ENCODE measurements at regions of chr7 and their contacts with region 1.

Region 1: GRCh38 chr7:101602484-101603241 is 26.4 kb downstream of the MYL10 start:
- DNase-seq: peak; percentile 85 to 90
- H3K4me3 ChIP-seq: no peak overlapping the region
- H3K4me3 Mint-ChIP-seq: no peak overlapping the region
- H3K27ac Mint-ChIP-seq: peak overlapping the region; percentile 86
- H3K4me1 ChIP-seq: peaks cover 35% of the 10 kb centered on the region
- H3K4me1 Mint-ChIP-seq: peaks cover 12% of the 10 kb centered on the region
- H3K27me3 ChIP-seq: no peaks in the 10 kb centered on the region
- H3K27me3 Mint-ChIP-seq: no peaks in the 10 kb centered on the region
- CTCF ChIP-seq: peak; percentile 86 to 94

Region 2: GRCh38 chr7:100874577-100875355 is 727.9 kb before region 1 on chr7 and contains the start of gene SRRT:
- CTCF ChIA-PET with region 1: no interaction called
- POLR2A ChIA-PET with region 1: no interaction called
- intact Hi-C with region 1: no loop called
- DNase-seq: peak; percentile 98 to 99
- H3K4me3 ChIP-seq: peak within 1 kb of the TSS; percentile 81
- H3K4me3 Mint-ChIP-seq: peak within 1 kb of the TSS; percentile 85
- H3K27ac Mint-ChIP-seq: peak within 1 kb of the TSS; percentile 98
- H3K4me1 ChIP-seq: peaks cover 10% of the 10 kb centered on the region; the same call in 1 of the 2 replicates
- H3K4me1 Mint-ChIP-seq: peaks cover 14% of the 10 kb centered on the region
- H3K27me3 ChIP-seq: no peaks in the 10 kb centered on the region
- H3K27me3 Mint-ChIP-seq: no peaks in the 10 kb centered on the region
- CTCF ChIP-seq: peak; percentile 33 to 48
- total RNA-seq, gene SRRT: 211 and 243 TPM in 2 replicates

Region 3: DNA sequence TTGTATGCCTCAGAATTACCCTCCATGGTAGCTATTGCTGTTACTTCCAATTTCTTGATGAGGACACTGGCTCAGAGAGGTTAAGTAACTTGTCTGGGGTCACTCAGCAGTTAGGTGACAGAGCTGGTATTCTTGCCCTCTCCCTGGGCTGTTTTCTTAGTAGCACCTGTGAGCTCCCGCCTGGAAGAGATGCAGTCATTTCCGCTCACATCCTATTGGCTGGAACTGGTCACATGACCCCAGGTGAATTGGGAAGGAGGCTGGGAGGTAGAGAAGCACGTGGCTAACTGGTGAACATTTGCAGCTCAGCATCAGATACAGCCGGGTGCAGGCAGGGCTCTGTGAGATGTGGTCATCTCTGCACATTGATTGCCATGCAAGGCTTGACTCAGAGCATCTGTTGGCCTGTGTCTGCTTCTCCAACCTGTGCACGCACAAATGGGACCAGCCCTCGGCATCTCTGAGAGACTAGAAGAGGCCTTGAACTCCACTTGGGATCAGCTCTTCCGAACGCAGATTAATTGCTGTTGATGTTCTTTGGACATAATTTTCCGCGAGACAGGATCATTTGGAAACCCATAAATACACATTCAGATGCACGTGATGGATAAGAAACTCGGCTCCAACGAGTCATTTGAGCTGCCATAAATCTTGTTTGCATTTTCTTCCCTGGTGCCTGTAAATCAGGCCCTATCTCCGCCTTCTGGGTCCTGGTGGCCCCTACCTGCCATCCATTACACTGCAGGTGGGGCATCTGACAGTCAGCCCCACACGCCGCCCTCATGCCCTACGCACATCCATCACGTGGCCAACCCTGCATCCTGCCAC is 16.4 kb before region 1 on chr7:
- CTCF ChIA-PET with region 1: interaction called, 5 read pairs
- POLR2A ChIA-PET with region 1: interaction called, 6 read pairs
- intact Hi-C with region 1: loop called (anchors 1 kb)
- DNase-seq: peak; percentile 72 to 89
- H3K4me3 ChIP-seq: no peak overlapping the region
- H3K4me3 Mint-ChIP-seq: peak overlapping the region; percentile 44
- H3K27ac Mint-ChIP-seq: peak overlapping the region; percentile 74
- H3K4me1 ChIP-seq: peaks cover 56% of the 10 kb centered on the region
- H3K4me1 Mint-ChIP-seq: peaks cover 48% of the 10 kb centered on the region
- H3K27me3 ChIP-seq: no peaks in the 10 kb centered on the region
- H3K27me3 Mint-ChIP-seq: no peaks in the 10 kb centered on the region
- CTCF ChIP-seq: peak in 1 of 2 experiments; percentile 28

Region 4: GRCh38 chr7:101650579-101651081 is 48.0 kb after region 1 on chr7:
- CTCF ChIA-PET with region 1: interaction called, 4 read pairs
- POLR2A ChIA-PET with region 1: no interaction called
- intact Hi-C with region 1: loop called (anchors 10 kb)
- DNase-seq: no peak
- H3K4me3 ChIP-seq: no peak overlapping the region
- H3K4me3 Mint-ChIP-seq: no peak overlapping the region
- H3K27ac Mint-ChIP-seq: no peak overlapping the region
- H3K4me1 ChIP-seq: peaks cover 14% of the 10 kb centered on the region
- H3K4me1 Mint-ChIP-seq: peaks cover 19% of the 10 kb centered on the region
- H3K27me3 ChIP-seq: no peaks in the 10 kb centered on the region
- H3K27me3 Mint-ChIP-seq: no peaks in the 10 kb centered on the region
- CTCF ChIP-seq: no peak

Region 5: GRCh38 chr7:101688183-101688831 is 85.6 kb after region 1 on chr7:
- CTCF ChIA-PET with region 1: interaction called, 3 read pairs
- POLR2A ChIA-PET with region 1: no interaction called
- intact Hi-C with region 1: loop called (anchors 5 kb)
- DNase-seq: peak; percentile 80 to 91
- H3K4me3 ChIP-seq: peak overlapping the region; percentile 42
- H3K4me3 Mint-ChIP-seq: no peak overlapping the region
- H3K27ac Mint-ChIP-seq: no peak overlapping the region
- H3K4me1 ChIP-seq: peaks cover 19% of the 10 kb centered on the region
- H3K4me1 Mint-ChIP-seq: peaks cover 13% of the 10 kb centered on the region
- H3K27me3 ChIP-seq: no peaks in the 10 kb centered on the region
- H3K27me3 Mint-ChIP-seq: no peaks in the 10 kb centered on the region
- CTCF ChIP-seq: peak; percentile 93 to 94

Region 6: GRCh38 chr7:102236592-102237287 is 634.1 kb after region 1 on chr7:
- CTCF ChIA-PET with region 1: no interaction called
- POLR2A ChIA-PET with region 1: no interaction called
- intact Hi-C with region 1: loop called (anchors 1 kb)
- DNase-seq: peak; percentile 74 to 81
- H3K4me3 ChIP-seq: no peak overlapping the region
- H3K4me3 Mint-ChIP-seq: no peak overlapping the region
- H3K27ac Mint-ChIP-seq: no peak overlapping the region
- H3K4me1 ChIP-seq: no peaks in the 10 kb centered on the region; the same call in 1 of the 2 replicates
- H3K4me1 Mint-ChIP-seq: no peaks in the 10 kb centered on the region
- H3K27me3 ChIP-seq: no peaks in the 10 kb centered on the region
- H3K27me3 Mint-ChIP-seq: no peaks in the 10 kb centered on the region
- CTCF ChIP-seq: peak; percentile 82 to 88